ENCODE measurements at regions of chr10 and their contacts with region 1.

Region 1: DNA sequence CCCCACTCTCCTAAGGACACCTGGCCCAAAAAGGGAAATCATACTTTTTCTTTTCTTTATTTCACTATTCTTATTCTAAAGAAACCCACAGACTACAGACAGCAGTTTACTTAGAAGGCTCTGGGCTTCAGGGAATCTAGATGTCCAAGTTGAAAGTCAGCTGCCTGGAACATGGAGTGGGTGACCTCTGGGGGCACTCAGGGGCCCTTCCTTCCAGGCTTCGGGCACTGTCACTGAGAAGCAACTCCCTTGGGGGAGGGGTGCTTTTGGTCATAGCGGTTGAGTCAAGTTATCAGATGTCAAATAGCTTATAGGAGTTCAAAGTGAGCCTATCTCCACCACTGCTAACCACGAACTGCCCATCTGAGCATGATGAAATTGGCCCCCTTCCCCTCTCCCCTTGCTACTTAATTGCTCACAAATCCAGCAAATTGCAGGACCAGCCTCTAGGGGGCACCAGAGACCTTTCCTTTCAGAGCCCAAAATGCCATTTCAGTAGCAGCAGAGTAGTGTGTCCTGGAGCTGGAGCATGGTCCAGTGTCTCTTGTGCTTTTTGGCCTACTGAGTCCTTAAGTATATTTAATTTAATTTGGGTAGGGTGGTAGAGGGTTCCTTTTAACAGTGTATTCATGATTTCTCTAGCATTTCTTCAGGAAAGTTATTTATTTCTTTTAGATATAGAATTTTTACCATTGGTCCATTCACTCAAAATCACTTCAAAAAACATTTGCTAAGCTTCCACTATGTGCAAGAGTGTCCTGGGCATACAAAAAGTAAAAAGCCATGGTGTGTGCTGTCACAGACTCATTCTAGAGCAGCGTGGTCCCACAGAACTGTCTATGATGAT is 463.8 kb downstream of the KCNMA1 start:
- DNase-seq: peak; percentile 66
- H3K4me3 ChIP-seq: no peak overlapping the region
- H3K27ac ChIP-seq: no peak overlapping the region
- H3K27me3 ChIP-seq: no peaks in the 10 kb centered on the region
- CTCF ChIP-seq: peak; percentile 93

Region 2: GRCh38 chr10:77146712-77147336 is 27.0 kb before region 1 on chr10:
- CTCF ChIA-PET with region 1: no interaction called
- POLR2A ChIA-PET with region 1: no interaction called
- DNase-seq: no peak
- H3K4me3 ChIP-seq: no peak overlapping the region
- H3K27ac ChIP-seq: no peak overlapping the region
- H3K27me3 ChIP-seq: no peaks in the 10 kb centered on the region
- CTCF ChIP-seq: no peak

Region 3: GRCh38 chr10:77251297-77252013 is 77.6 kb after region 1 on chr10:
- CTCF ChIA-PET with region 1: interaction called, 13 read pairs
- POLR2A ChIA-PET with region 1: no interaction called
- DNase-seq: no peak
- H3K4me3 ChIP-seq: no peak overlapping the region
- H3K27ac ChIP-seq: no peak overlapping the region
- H3K27me3 ChIP-seq: no peaks in the 10 kb centered on the region
- CTCF ChIP-seq: peak; percentile 77

Region 4: DNA sequence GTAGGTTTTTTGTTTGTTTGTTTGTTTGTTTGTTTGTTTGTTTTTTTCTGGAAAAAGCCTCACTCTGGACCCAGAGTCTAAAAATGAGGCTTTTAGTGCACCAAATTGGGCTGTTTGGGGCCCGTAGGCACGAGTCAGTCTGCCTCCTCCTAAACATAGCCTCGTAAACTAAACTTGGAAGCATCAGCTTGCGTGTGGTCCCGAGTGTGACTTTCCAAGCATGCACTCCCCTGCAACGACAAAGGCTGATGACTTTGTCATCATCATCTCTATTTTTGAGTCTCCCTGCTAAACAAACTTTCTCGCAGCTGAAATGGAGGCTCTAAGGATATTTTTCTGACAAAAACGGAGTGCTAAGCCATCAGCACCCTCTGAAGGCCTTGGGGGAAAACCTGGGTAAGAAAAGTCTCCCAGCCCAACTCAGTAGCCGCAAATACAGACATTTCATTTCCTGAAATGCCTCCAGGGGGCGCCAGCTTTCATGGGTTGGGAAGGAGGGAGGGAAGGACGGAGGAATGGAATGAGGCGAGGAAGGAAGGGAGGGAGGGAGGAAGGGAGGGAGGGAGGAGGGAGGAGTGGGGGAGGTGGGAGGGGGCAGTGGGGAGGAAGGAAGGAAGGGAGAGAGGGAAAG is 217.9 kb after region 1 on chr10:
- CTCF ChIA-PET with region 1: interaction called, 27 read pairs
- POLR2A ChIA-PET with region 1: no interaction called
- DNase-seq: peak; percentile 73
- H3K4me3 ChIP-seq: no peak overlapping the region
- H3K27ac ChIP-seq: peak overlapping the region; percentile 78
- H3K27me3 ChIP-seq: no peaks in the 10 kb centered on the region
- CTCF ChIP-seq: peak; percentile 79

Region 5: GRCh38 chr10:77428691-77429395 is 255.0 kb after region 1 on chr10:
- CTCF ChIA-PET with region 1: interaction called, 23 read pairs
- POLR2A ChIA-PET with region 1: no interaction called
- DNase-seq: peak; percentile 60
- H3K4me3 ChIP-seq: no peak overlapping the region
- H3K27ac ChIP-seq: no peak overlapping the region
- H3K27me3 ChIP-seq: no peaks in the 10 kb centered on the region
- CTCF ChIP-seq: peak; percentile 92

Region 6: GRCh38 chr10:77635402-77636227 is 461.8 kb after region 1 on chr10:
- CTCF ChIA-PET with region 1: interaction called, 199 read pairs
- POLR2A ChIA-PET with region 1: no interaction called
- DNase-seq: no peak
- H3K4me3 ChIP-seq: peak overlapping the region; percentile 91
- H3K27ac ChIP-seq: peak overlapping the region; percentile 21
- H3K27me3 ChIP-seq: no peaks in the 10 kb centered on the region
- CTCF ChIP-seq: no peak